Transverse colon (tissue), 4 donors: ENCODE measurements at regions of chr12 and their contacts with region 1.

Region 1: DNA sequence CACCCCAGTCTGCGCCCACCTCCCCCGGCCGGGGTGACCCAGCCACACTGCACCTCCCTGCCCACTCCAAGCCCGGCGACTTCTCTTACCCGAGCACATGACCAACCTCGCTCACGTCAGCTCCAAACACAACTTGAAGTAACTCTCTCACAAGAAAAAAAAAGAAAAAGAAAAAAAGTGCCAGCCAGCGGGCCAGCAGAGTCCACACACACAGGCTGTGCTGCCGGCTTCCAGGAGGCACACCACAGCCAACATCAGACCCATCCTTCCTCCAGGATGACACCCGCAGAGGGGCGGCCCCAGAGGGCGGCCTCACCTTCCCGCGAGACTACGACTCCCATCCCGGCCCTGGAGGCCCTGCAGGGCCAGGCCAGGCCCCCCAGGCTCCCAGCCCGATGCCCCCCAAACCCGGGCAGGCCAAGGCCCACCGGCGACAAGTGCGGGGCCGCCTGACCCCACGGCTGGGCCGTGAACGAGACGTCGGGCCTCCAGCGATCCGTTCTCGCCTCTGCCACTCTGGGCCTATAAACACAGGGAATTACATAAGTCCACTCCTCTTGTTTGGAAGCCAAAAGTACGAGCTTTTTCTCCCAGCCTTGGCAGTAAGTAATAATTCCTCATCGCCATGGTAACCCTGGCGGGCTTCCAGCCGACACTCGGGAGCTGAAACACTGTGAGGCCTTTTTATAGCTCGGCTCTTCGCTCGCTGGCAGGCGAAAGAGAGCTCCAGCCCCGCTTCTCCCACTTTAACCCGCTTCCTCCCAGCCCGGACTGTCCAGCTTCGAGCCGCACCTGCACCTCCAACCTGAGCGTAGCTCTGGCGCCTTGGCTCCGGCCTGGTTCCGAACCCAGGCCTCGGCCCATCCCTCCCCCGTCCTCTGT is 49.1 kb downstream of the NCOR2 start:
- DNase-seq: peak; percentile 97
- H3K4me3 ChIP-seq: peak overlapping the region; percentile 22 to 50 (median 38)
- H3K27ac ChIP-seq: peak overlapping the region; percentile 96 to 100 (median 98)
- H3K4me1 ChIP-seq: peaks cover 50 to 69% (median 59%) of the 10 kb centered on the region in 4 donors
- H3K27me3 ChIP-seq: no peaks in the 10 kb centered on the region
- CTCF ChIP-seq: no peak
- EP300 ChIP-seq: no peak
- POLR2A ChIP-seq: peak; percentile 45

Region 2: DNA sequence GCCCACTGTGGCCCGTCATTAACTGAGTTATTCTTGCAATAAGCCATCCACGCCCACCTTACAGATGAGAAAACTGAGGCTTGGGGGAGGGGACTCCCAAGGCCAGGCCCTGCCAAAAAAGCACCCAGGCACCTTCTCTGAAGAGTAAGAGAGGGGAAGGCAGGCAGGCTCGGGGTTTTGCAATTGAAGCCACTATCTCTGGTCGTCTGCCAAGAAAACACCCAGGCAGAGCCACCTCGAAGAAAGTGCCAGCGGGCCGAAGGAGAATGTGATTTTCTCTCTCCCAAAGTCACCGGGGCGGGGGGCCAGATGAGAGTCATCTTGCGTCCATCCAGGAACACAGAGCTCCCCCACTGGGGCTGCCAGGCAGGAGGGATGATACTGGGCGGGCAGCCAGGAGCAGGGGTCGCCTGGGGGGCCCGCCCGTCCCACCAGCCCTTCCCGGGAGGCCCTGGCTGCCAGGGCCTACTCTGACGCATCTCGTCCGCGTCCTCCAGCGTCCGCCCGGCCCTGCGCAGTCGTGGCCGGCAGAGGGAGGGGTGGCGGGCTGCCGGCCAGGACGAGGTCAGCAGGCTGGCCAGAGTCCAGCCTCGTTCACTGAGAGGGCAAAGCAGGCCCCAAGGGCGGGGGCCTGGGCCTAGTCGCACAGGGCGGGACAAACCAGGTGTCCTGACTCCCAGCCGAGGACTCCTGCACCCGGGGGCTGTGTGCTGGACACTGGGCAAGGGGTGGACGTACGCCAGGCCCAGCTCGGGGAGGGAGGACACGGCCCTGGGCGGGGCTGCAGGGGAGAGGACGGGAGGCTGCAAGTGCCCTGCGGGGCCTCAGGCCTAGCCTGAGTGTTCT is 149.0 kb before region 1 on chr12:
- in situ Hi-C with region 1: no loop called
- intact Hi-C with region 1: loop called (anchors 10 kb)
- DNase-seq: peak; percentile 86
- H3K4me3 ChIP-seq: no peak overlapping the region
- H3K27ac ChIP-seq: peak overlapping the region; percentile 84 to 91 (median 89)
- H3K4me1 ChIP-seq: peaks cover 34 to 40% (median 38%) of the 10 kb centered on the region in 4 donors
- H3K27me3 ChIP-seq: no peaks in the 10 kb centered on the region
- CTCF ChIP-seq: peak; percentile 38 to 78 (median 48)
- EP300 ChIP-seq: peak; percentile 35
- POLR2A ChIP-seq: no peak

Region 3: GRCh38 chr12:124551268-124552144 is 33.2 kb after region 1 on chr12:
- in situ Hi-C with region 1: no loop called
- intact Hi-C with region 1: loop called (anchors 5 kb)
- DNase-seq: peak; percentile 42
- H3K4me3 ChIP-seq: no peak overlapping the region
- H3K27ac ChIP-seq: peak overlapping the region; percentile 68 to 77 (median 74)
- H3K4me1 ChIP-seq: peaks cover 34 to 77% (median 54%) of the 10 kb centered on the region in 4 donors
- H3K27me3 ChIP-seq: no peaks in the 10 kb centered on the region
- CTCF ChIP-seq: no peak
- EP300 ChIP-seq: no peak
- POLR2A ChIP-seq: no peak

Region 4: GRCh38 chr12:124567661-124568373 is 49.5 kb after region 1 on chr12:
- in situ Hi-C with region 1: loop called in 1 of 4 experiments (anchors 10 kb)
- intact Hi-C with region 1: loop called (anchors 5 kb)
- DNase-seq: peak; percentile 92
- H3K4me3 ChIP-seq: peak overlapping the region; percentile 8 to 57 (median 38)
- H3K27ac ChIP-seq: peak overlapping the region; percentile 82 to 100 (median 88)
- H3K4me1 ChIP-seq: peaks cover 23 to 47% (median 41%) of the 10 kb centered on the region in 4 donors
- H3K27me3 ChIP-seq: no peaks in the 10 kb centered on the region
- CTCF ChIP-seq: no peak
- EP300 ChIP-seq: no peak
- POLR2A ChIP-seq: no peak

Region 5: GRCh38 chr12:124814741-124815613 is 296.7 kb after region 1 on chr12:
- in situ Hi-C with region 1: no loop called
- intact Hi-C with region 1: no loop called
- DNase-seq: peak; percentile 25
- H3K4me3 ChIP-seq: no peak overlapping the region
- H3K27ac ChIP-seq: no peak overlapping the region
- H3K4me1 ChIP-seq: no peaks in the 10 kb centered on the region
- H3K27me3 ChIP-seq: no peaks in the 10 kb centered on the region
- CTCF ChIP-seq: no peak
- EP300 ChIP-seq: no peak
- POLR2A ChIP-seq: no peak